ENCODE measurements at regions of chr3 and their contacts with region 1.

Region 1: GRCh38 chr3:26099692-26100091 is 309.8 kb downstream of the OXSM start:
- DNase-seq: peak; percentile 33 to 57
- ATAC-seq: peak; percentile 98
- H3K4me3 ChIP-seq: no peak overlapping the region
- H3K27ac ChIP-seq: peak overlapping the region; percentile 76 to 86 (median 81)
- H3K4me1 ChIP-seq: peaks cover 42 to 56% of the 10 kb centered on the region in 2 donors
- H3K27me3 ChIP-seq: no peaks in the 10 kb centered on the region
- CTCF ChIP-seq: no peak
- POLR2A ChIP-seq: peak in 1 of 2 donors; percentile 21

Region 2: DNA sequence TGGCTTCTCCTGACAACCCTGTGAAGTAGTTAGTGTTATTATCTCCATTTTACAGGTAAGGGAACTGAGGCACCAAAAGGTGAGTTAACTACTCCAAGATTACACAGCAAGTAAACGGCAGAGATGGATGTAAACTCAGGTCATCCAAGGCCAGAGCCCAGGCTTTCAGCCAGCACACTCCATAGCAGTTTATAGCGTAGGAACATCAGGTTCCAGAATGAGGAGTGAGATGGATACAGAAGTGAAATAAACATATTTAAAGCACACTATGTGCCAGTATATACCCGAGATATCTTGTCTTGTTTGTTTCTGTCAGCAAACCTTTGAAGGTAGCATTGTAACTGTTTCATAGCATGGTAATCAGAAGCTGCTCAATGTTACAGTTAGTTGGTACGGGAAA is 30.8 kb before region 1 on chr3:
- in situ Hi-C with region 1: no loop called
- intact Hi-C with region 1: loop called (anchors 2 kb)
- DNase-seq: peak; percentile 12 to 59
- ATAC-seq: peak in 1 of 2 donors; percentile 99
- H3K4me3 ChIP-seq: no peak overlapping the region
- H3K27ac ChIP-seq: peak overlapping the region in 3 of 4 donors; percentile 46 to 78 (median 57)
- H3K4me1 ChIP-seq: peaks cover 11 to 21% of the 10 kb centered on the region in 2 donors
- H3K27me3 ChIP-seq: no peaks in the 10 kb centered on the region
- CTCF ChIP-seq: no peak
- POLR2A ChIP-seq: no peak

Region 3: GRCh38 chr3:26081166-26081565 is 18.5 kb before region 1 on chr3:
- in situ Hi-C with region 1: no loop called
- intact Hi-C with region 1: no loop called
- DNase-seq: no peak
- ATAC-seq: no peak
- H3K4me3 ChIP-seq: no peak overlapping the region
- H3K27ac ChIP-seq: no peak overlapping the region
- H3K4me1 ChIP-seq: no peaks in the 10 kb centered on the region
- H3K27me3 ChIP-seq: no peaks in the 10 kb centered on the region
- CTCF ChIP-seq: no peak
- POLR2A ChIP-seq: no peak

Measured in gastrocnemius medialis (tissue), 4 donors.